SK-N-SH (cell line): ENCODE measurements at regions of chr19 and their contacts with region 1.

Region 1: GRCh38 chr19:17390665-17391370 is 3.2 kb downstream of the CCDC194 start:
- DNase-seq: peak; percentile 99
- H3K4me3 ChIP-seq: peak overlapping the region; percentile 59 to 65
- H3K27ac ChIP-seq: peak overlapping the region in 1 of 2 experiments; percentile 63; a peak in 2 of 4 replicates
- H3K4me1 ChIP-seq: peaks cover 0 to 7% of the 10 kb centered on the region in 2 experiments; a peak in 1 of 4 replicates
- H3K27me3 ChIP-seq: no peaks in the 10 kb centered on the region
- CTCF ChIP-seq: peak; percentile 62
- EP300 ChIP-seq: no peak
- RAD21 ChIP-seq: peak; percentile 56

Region 2: GRCh38 chr19:17337723-17338492 is 52.9 kb before region 1 on chr19:
- CTCF ChIA-PET with region 1: interaction called, 80 read pairs
- POLR2A ChIA-PET with region 1: no interaction called
- DNase-seq: peak; percentile 62
- H3K4me3 ChIP-seq: peak overlapping the region; percentile 91 to 99
- H3K27ac ChIP-seq: peak overlapping the region; percentile 15 to 73; a peak in 3 of 4 replicates
- H3K4me1 ChIP-seq: peaks cover 0 to 22% of the 10 kb centered on the region in 2 experiments; a peak in 1 of 4 replicates
- H3K27me3 ChIP-seq: no peaks in the 10 kb centered on the region
- CTCF ChIP-seq: no peak
- EP300 ChIP-seq: no peak
- RAD21 ChIP-seq: no peak

Region 3: GRCh38 chr19:17358395-17358794 is 32.4 kb before region 1 on chr19:
- CTCF ChIA-PET with region 1: interaction called, 20 read pairs
- POLR2A ChIA-PET with region 1: no interaction called
- DNase-seq: no peak
- H3K4me3 ChIP-seq: no peak overlapping the region
- H3K27ac ChIP-seq: no peak overlapping the region
- H3K4me1 ChIP-seq: no peaks in the 10 kb centered on the region
- H3K27me3 ChIP-seq: no peaks in the 10 kb centered on the region
- CTCF ChIP-seq: no peak
- EP300 ChIP-seq: no peak
- RAD21 ChIP-seq: no peak

Region 4: DNA sequence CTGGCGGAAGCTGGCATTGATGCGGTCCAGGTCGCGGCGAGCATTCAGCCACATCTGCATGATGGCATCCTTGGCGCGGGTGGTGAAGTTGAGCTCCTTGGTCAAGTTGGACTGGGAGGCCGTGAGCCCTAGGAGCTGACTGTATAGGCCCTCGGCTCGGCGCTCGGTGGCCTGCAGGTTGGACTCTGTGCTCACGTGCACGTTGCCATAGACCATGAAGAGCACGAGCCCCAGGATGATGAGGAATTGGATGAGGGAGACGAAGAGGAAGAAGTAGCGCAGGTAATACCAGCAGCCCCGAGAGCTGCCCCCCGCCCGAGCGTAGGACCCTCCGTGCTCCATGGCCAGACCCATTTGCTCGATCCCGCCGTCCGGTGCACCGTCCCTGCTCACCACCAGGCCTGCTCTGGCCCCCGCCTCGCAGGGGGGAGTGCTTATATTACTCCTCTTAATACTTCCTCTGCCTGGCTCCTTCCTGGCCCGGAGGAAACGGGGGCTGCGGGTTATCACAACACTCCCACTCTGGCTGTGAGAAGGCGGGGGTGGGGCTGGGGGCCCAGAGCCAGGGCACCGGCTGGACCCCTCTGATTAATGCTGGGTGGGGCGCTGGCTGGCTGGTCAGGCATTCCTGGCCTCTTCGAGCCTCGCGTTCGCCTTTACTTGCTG is 13.8 kb before region 1 on chr19 and contains the start of gene PLVAP:
- CTCF ChIA-PET with region 1: interaction called, 37 read pairs
- POLR2A ChIA-PET with region 1: interaction called, 3 read pairs
- DNase-seq: no peak
- H3K4me3 ChIP-seq: no peak within 1 kb of the TSS
- H3K27ac ChIP-seq: no peak within 1 kb of the TSS
- H3K4me1 ChIP-seq: no peaks in the 10 kb centered on the region
- H3K27me3 ChIP-seq: no peaks in the 10 kb centered on the region
- CTCF ChIP-seq: no peak
- EP300 ChIP-seq: no peak
- RAD21 ChIP-seq: no peak
- polyA plus RNA-seq, gene PLVAP: not detected in 2 replicates